ENCODE measurements at regions of chr15 and their contacts with region 1.

Region 1: GRCh38 chr15:92521624-92522008 is 127.9 kb downstream of the ST8SIA2 start:
- DNase-seq: peak; percentile 38 to 70
- H3K4me3 ChIP-seq: no peak overlapping the region
- H3K27ac ChIP-seq: no peak overlapping the region
- H3K4me1 ChIP-seq: peaks cover 0 to 7% (median 0%) of the 10 kb centered on the region in 4 experiments; a peak in 1 of 7 replicates
- H3K27me3 ChIP-seq: no peaks in the 10 kb centered on the region
- CTCF ChIP-seq: peak; percentile 53 to 80 (median 70)
- EP300 ChIP-seq: no peak
- POLR2A ChIP-seq: no peak
- RAD21 ChIP-seq: peak; percentile 84 to 89

Region 2: GRCh38 chr15:92672102-92672501 is 150.5 kb after region 1 on chr15:
- CTCF ChIA-PET with region 1: interaction called, 12 read pairs
- POLR2A ChIA-PET with region 1: no interaction called
- DNase-seq: no peak
- H3K4me3 ChIP-seq: no peak overlapping the region
- H3K27ac ChIP-seq: no peak overlapping the region
- H3K4me1 ChIP-seq: peaks cover 5 to 9% (median 6%) of the 10 kb centered on the region in 4 experiments
- H3K27me3 ChIP-seq: peaks cover 0 to 5% (median 1%) of the 10 kb centered on the region in 4 experiments; a peak in 3 of 7 replicates
- CTCF ChIP-seq: no peak
- EP300 ChIP-seq: no peak
- POLR2A ChIP-seq: no peak
- RAD21 ChIP-seq: no peak

Region 3: GRCh38 chr15:92683232-92683834 is 161.7 kb after region 1 on chr15:
- CTCF ChIA-PET with region 1: interaction called, 26 read pairs
- POLR2A ChIA-PET with region 1: no interaction called
- DNase-seq: peak; percentile 25 to 59
- H3K4me3 ChIP-seq: no peak overlapping the region
- H3K27ac ChIP-seq: no peak overlapping the region
- H3K4me1 ChIP-seq: no peaks in the 10 kb centered on the region
- H3K27me3 ChIP-seq: no peaks in the 10 kb centered on the region
- CTCF ChIP-seq: peak; percentile 75 to 83 (median 76)
- EP300 ChIP-seq: no peak
- POLR2A ChIP-seq: no peak
- RAD21 ChIP-seq: peak; percentile 92 to 94

Region 4: GRCh38 chr15:92714477-92715401 is 193.1 kb after region 1 on chr15:
- CTCF ChIA-PET with region 1: interaction called, 16 read pairs
- POLR2A ChIA-PET with region 1: no interaction called
- DNase-seq: peak in 1 of 2 experiments; percentile 92
- H3K4me3 ChIP-seq: peak overlapping the region; percentile 51 to 72 (median 62)
- H3K27ac ChIP-seq: no peak overlapping the region
- H3K4me1 ChIP-seq: peaks cover 0 to 5% (median 3%) of the 10 kb centered on the region in 4 experiments; a peak in 4 of 7 replicates
- H3K27me3 ChIP-seq: peaks cover 0 to 31% (median 14%) of the 10 kb centered on the region in 4 experiments; a peak in 6 of 7 replicates
- CTCF ChIP-seq: peak; percentile 52 to 83 (median 75)
- EP300 ChIP-seq: no peak
- POLR2A ChIP-seq: peak in 1 of 2 experiments; percentile 38; a peak in 2 of 3 replicates
- RAD21 ChIP-seq: peak; percentile 93 to 96